Esophagus muscularis mucosa (tissue), 4 donors: ENCODE measurements at regions of chr5 and their contacts with region 1.

Region 1: DNA sequence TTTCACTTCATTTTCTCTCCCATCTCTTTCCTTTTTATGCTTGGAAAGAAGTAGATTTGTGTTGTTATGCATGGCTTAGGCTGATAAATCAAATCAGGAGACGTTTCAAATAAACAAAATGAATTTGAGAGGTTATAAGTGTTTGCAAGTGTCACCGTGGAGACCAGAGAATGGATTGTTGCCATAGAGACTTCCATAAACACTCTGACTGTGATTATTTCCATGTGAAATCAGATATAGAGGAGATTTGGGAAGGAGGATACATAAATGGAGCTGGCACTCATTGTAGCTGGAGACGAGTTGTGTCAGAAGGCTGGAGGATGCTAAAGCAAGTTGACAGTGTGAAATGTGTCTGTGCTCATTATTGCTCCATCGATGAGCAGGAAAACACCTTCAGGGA is 84.2 kb upstream of the PCSK1 start:
- DNase-seq: no peak
- H3K4me3 ChIP-seq: no peak overlapping the region
- H3K27ac ChIP-seq: peak overlapping the region in 3 of 4 donors; percentile 4 to 53 (median 7)
- H3K4me1 ChIP-seq: peaks cover 0 to 22% (median 18%) of the 10 kb centered on the region in 4 donors
- H3K27me3 ChIP-seq: no peaks in the 10 kb centered on the region
- CTCF ChIP-seq: no peak
- EP300 ChIP-seq: no peak
- POLR2A ChIP-seq: no peak

Region 2: DNA sequence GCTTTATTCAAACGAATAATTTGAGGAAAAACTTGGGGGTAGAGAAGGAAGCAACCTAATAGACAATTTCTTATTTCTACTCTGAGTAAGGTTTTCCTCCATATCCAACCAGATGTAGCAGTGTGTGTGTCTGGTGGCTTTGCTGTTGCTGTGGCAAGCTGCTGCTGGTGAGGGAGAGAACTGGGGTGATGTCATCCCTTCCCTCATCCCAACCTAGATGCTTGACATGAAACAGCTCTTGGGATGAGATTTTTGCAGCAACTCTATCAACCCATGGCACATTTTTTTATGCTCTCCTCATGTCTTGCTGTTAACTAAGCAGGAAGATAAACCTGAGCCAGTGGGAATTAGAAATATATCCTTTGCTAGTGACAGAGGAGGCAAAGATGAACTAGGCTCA is 220.0 kb before region 1 on chr5:
- intact Hi-C with region 1: no loop called
- DNase-seq: no peak
- H3K4me3 ChIP-seq: no peak overlapping the region
- H3K27ac ChIP-seq: peak overlapping the region; percentile 6 to 57 (median 42)
- H3K4me1 ChIP-seq: peaks cover 4 to 50% (median 33%) of the 10 kb centered on the region in 4 donors
- H3K27me3 ChIP-seq: no peaks in the 10 kb centered on the region
- CTCF ChIP-seq: no peak
- EP300 ChIP-seq: no peak
- POLR2A ChIP-seq: no peak

Region 3: DNA sequence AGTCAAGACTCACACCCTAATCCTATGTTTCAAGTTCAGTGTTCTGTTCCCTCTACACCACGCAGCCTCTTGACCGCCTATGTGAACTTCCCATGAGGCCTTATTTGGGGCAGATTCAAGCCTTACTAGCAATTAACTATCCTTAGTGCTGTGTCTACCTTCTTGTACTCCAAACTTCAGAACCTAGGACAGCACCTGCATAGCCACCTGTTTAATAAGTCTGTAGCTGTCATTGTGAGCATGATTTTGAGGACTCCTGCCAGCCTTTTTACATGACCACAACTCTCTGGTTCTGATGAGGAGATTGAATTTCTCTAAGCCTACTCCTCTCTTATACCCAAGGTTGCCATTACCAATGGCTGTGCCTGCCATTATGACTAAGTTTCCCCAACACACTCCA is 33.4 kb before region 1 on chr5:
- intact Hi-C with region 1: loop called (anchors 2 kb)
- DNase-seq: no peak
- H3K4me3 ChIP-seq: no peak overlapping the region
- H3K27ac ChIP-seq: no peak overlapping the region
- H3K4me1 ChIP-seq: no peaks in the 10 kb centered on the region
- H3K27me3 ChIP-seq: no peaks in the 10 kb centered on the region
- CTCF ChIP-seq: no peak
- EP300 ChIP-seq: no peak
- POLR2A ChIP-seq: no peak